MCF 10A (cell line): ENCODE measurements at regions of chr3 and their contacts with region 1.

Region 1: DNA sequence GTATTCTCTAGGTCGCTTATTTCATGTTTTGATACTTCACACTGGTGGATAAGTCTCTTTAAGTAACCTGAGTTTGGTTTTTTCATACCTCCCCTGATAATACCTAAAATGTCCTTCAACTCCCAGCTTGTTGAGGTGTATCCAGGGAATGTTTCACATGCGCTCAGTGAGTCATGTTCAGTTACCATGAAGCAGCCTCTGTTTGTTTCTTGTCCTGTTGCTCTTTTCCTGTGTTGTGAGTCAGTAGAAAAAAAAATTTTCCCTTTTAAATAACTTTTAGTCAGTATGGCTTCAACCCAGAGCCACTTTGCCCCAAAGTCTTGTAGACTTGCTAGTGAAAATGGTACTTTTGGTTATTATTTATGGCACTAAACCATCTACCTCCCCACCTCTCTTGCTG is 278.4 kb upstream of the ZPLD1 start:
- DNase-seq: peak; percentile 90
- H3K4me3 Mint-ChIP-seq: no peak overlapping the region
- H3K27ac Mint-ChIP-seq: peak overlapping the region; percentile 98
- H3K4me1 Mint-ChIP-seq: peaks cover 25% of the 10 kb centered on the region
- H3K27me3 Mint-ChIP-seq: no peaks in the 10 kb centered on the region
- CTCF ChIP-seq: no peak

Region 2: GRCh38 chr3:102129760-102130608 is 26.4 kb before region 1 on chr3:
- CTCF ChIA-PET with region 1: no interaction called
- POLR2A ChIA-PET with region 1: interaction called, 11 read pairs
- intact Hi-C with region 1: loop called (anchors 2 kb)
- DNase-seq: peak; percentile 83
- H3K4me3 Mint-ChIP-seq: peak overlapping the region; percentile 43
- H3K27ac Mint-ChIP-seq: peak overlapping the region; percentile 83
- H3K4me1 Mint-ChIP-seq: peaks cover 43% of the 10 kb centered on the region
- H3K27me3 Mint-ChIP-seq: no peaks in the 10 kb centered on the region
- CTCF ChIP-seq: no peak

Region 3: GRCh38 chr3:102332205-102332604 is 175.8 kb after region 1 on chr3:
- CTCF ChIA-PET with region 1: no interaction called
- POLR2A ChIA-PET with region 1: no interaction called
- intact Hi-C with region 1: no loop called
- DNase-seq: peak; percentile 9
- H3K4me3 Mint-ChIP-seq: no peak overlapping the region
- H3K27ac Mint-ChIP-seq: no peak overlapping the region
- H3K4me1 Mint-ChIP-seq: no peaks in the 10 kb centered on the region
- H3K27me3 Mint-ChIP-seq: no peaks in the 10 kb centered on the region
- CTCF ChIP-seq: no peak